ENCODE measurements at regions of chr5 and their contacts with region 1.

Region 1: GRCh38 chr5:142769741-142770631 is at the start of gene ARHGAP26:
- DNase-seq: peak; percentile 94
- H3K4me3 Mint-ChIP-seq: peak within 1 kb of the TSS; percentile 93
- H3K27ac Mint-ChIP-seq: peak within 1 kb of the TSS; percentile 87
- H3K4me1 Mint-ChIP-seq: peaks cover 34% of the 10 kb centered on the region
- H3K27me3 Mint-ChIP-seq: no peaks in the 10 kb centered on the region
- total RNA-seq, gene ARHGAP26: 21.0 to 21.5 TPM

Region 2: GRCh38 chr5:142597546-142598341 is 172.2 kb before region 1 on chr5:
- CTCF ChIA-PET with region 1: no interaction called
- POLR2A ChIA-PET with region 1: no interaction called
- DNase-seq: no peak
- H3K4me3 Mint-ChIP-seq: no peak overlapping the region
- H3K27ac Mint-ChIP-seq: no peak overlapping the region
- H3K4me1 Mint-ChIP-seq: no peaks in the 10 kb centered on the region
- H3K27me3 Mint-ChIP-seq: peaks cover 15% of the 10 kb centered on the region

Region 3: DNA sequence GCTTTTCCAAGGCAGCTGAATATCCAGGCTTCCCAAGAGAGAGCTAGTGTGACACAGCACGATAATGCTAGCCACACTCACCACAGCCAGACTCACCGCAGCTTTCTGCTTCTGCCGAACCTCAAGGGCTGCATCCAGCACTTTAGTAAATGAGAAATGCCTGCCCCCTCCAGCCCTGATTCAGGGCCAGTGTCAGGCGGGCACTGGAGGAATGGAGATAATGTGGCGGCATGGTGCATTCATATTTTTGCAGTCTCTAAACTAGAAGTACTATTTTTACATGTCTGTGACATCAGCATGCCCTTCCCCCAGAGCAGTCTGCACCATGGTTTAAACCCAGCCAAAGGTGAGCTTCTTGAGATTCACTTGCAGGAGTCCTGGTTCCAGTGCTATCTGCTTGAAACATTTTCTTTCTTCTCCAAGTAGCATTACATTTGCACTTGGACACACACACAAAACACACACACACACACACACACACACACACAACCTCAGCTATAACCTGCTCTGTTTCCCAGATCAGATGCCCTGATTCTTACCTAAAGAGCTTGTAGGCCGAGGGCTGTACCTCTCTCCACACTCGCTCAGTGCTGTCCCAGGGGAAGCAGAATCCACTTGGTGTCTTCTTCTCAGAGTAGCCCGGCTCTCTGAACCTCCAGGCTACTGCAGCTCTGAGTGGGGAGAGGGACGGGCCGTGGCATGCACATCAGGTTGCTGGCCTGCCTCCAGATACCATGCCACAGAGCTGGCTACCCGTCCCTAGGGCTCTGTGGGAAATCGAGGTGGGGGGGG is 84.4 kb before region 1 on chr5 and contains the start of gene FGF1:
- CTCF ChIA-PET with region 1: no interaction called
- POLR2A ChIA-PET with region 1: no interaction called
- DNase-seq: no peak
- H3K4me3 Mint-ChIP-seq: no peak within 1 kb of the TSS
- H3K27ac Mint-ChIP-seq: no peak within 1 kb of the TSS
- H3K4me1 Mint-ChIP-seq: no peaks in the 10 kb centered on the region
- H3K27me3 Mint-ChIP-seq: peaks cover 6% of the 10 kb centered on the region
- total RNA-seq, gene FGF1: not detected

Region 4: GRCh38 chr5:142783601-142784341 is 13.8 kb after region 1 on chr5:
- CTCF ChIA-PET with region 1: interaction called, 24 read pairs
- POLR2A ChIA-PET with region 1: no interaction called
- DNase-seq: peak; percentile 39
- H3K4me3 Mint-ChIP-seq: no peak overlapping the region
- H3K27ac Mint-ChIP-seq: peak overlapping the region; percentile 71
- H3K4me1 Mint-ChIP-seq: peaks cover 57% of the 10 kb centered on the region
- H3K27me3 Mint-ChIP-seq: no peaks in the 10 kb centered on the region

Region 5: DNA sequence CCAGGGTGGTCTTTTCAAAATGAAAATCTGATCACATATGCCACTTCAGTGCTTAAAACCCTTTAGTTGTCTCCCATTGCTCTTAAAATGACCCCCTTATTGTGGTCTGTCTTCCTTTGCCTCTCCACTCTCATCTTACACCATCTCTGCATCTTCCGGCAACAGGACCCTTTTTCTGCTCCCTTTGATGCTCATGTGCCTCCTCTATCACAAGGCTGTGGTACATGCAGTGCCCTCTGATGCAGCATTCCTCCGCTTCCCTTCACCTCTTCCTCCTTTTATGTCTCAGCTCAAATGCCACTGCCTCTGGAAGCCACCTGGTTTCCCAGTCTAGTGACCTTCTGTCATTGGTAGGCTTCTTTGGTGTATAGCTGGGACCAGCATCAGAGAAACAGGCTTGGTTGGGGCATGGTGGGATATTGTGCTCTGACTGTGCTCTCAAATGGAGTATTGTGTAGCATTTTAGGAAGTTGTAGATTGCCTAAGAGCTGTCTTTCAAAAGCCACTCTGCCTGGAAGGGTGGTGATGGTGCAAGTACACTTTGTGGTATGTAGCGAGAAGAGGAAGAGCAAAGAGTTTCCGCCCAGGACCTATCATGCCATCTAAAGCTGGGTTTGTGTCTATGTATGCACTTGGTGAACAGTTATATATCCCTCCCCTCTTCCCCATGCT is 28.2 kb after region 1 on chr5:
- CTCF ChIA-PET with region 1: interaction called, 12 read pairs
- POLR2A ChIA-PET with region 1: interaction called, 6 read pairs
- DNase-seq: peak; percentile 54
- H3K4me3 Mint-ChIP-seq: peak overlapping the region; percentile 47
- H3K27ac Mint-ChIP-seq: peak overlapping the region; percentile 95
- H3K4me1 Mint-ChIP-seq: peaks cover 78% of the 10 kb centered on the region
- H3K27me3 Mint-ChIP-seq: no peaks in the 10 kb centered on the region

Region 6: DNA sequence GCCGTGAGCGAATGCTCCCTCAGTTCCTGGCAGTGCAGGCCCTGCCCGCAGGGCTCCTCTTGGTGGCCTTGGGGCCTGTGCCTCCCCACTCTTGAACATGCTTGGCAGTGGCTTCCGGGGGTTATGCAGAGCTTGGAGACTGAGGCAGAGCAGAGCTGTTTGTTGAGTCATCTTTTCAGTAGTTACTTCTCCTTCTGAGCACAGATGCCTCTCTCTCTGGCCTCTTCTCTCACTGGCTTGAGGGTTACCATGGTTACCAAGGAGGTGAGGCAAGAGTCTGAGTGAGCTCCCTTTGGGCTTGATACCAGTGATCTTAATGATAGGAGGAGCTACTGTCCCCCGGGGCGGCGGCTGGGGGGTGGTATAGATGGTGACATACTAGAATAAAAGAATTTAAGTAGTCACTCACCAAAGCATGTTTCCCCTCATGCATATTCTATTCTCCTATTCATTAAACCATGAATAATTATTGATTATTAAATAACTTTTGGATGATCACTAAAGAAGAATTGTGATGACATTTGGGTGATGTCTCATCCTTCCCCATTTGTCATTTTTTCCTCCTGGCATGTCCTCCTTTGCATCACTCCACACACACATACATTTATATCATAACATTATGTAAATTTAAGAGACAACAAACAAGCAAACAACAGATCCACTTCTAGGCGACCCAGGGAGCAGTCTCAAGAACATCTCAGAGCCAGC is 111.2 kb after region 1 on chr5:
- CTCF ChIA-PET with region 1: interaction called, 11 read pairs
- POLR2A ChIA-PET with region 1: no interaction called
- DNase-seq: no peak
- H3K4me3 Mint-ChIP-seq: no peak overlapping the region
- H3K27ac Mint-ChIP-seq: no peak overlapping the region
- H3K4me1 Mint-ChIP-seq: peaks cover 5% of the 10 kb centered on the region
- H3K27me3 Mint-ChIP-seq: no peaks in the 10 kb centered on the region

Region 7: GRCh38 chr5:143054480-143054941 is 284.5 kb after region 1 on chr5:
- CTCF ChIA-PET with region 1: no interaction called
- POLR2A ChIA-PET with region 1: no interaction called
- DNase-seq: no peak
- H3K4me3 Mint-ChIP-seq: no peak overlapping the region
- H3K27ac Mint-ChIP-seq: no peak overlapping the region
- H3K4me1 Mint-ChIP-seq: peaks cover 41% of the 10 kb centered on the region
- H3K27me3 Mint-ChIP-seq: no peaks in the 10 kb centered on the region